Thyroid gland (tissue), 4 donors: ENCODE measurements at regions of chr2 and their contacts with region 1.

Region 1: DNA sequence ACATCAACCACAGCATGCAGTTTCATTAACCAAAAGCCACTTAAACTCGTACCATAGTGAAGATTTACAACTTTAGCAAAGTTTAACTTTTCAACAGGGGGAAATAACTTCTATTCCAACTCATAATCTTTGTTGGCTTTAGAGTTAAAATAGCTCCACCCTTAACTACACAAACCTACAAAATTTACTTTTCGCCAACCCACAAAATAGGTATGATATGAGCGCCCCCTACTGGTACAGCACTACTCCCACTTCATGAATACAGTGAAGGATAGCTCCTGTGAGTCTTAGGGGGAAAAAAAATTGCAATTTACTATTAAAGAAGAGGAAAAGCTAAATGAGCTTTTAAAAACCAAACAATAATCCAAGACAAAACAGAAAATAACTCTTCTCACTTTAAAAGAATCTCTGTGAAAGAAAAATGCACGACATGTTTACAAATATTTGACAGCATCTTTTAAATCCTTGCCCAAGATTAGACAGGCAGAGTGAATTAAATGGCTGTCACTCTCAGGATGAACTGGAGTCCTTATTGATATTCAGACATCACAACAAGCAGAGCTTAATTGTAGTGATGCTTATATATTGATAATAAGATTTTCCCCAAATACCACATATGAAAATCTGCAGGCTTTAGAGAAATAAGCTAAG is 32.2 kb downstream of the TMEFF2 start:
- DNase-seq: peak; percentile 64 to 77
- H3K4me3 ChIP-seq: no peak overlapping the region
- H3K27ac ChIP-seq: no peak overlapping the region
- H3K4me1 ChIP-seq: peaks cover 0 to 6% of the 10 kb centered on the region in 2 donors
- H3K27me3 ChIP-seq: no peaks in the 10 kb centered on the region
- CTCF ChIP-seq: peak; percentile 82 to 97 (median 89)
- POLR2A ChIP-seq: no peak

Region 2: DNA sequence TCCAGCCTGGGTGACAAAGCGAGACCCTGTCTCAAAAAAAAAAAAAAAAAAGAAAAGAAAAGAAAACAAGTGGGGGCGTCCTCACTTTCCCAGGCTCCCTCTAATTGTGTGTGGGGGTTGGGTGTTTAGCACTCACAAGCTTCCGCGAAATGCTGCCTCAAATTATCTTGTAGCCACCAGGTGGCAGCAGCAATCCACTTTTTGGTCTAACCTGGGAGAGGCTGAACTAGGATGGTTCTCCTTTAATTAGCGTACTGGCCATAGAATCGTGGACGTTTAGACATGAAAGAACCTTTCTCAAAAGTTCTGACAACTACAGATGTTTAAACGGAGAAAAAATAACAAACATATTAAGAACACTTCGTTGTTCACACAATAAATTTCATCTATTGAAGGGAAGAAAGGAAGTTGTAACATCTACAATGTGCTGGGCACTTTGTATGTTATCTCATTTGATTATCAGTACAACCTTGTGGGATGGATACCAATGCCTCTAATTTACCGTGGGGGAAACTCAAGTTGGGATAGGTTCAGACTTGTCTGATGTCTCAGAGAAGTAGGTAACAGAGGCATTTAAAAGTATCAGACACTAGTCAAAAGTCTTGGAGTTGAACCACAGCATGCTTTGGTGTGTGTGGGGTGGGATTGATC is 607.3 kb before region 1 on chr2:
- intact Hi-C with region 1: loop called (anchors 10 kb)
- DNase-seq: peak; percentile 78 to 85
- H3K4me3 ChIP-seq: no peak overlapping the region
- H3K27ac ChIP-seq: no peak overlapping the region
- H3K4me1 ChIP-seq: no peaks in the 10 kb centered on the region
- H3K27me3 ChIP-seq: no peaks in the 10 kb centered on the region
- CTCF ChIP-seq: peak in 5 of 6 experiments; percentile 35 to 76 (median 72)
- POLR2A ChIP-seq: no peak

Region 3: GRCh38 chr2:191811807-191812602 is 350.5 kb before region 1 on chr2:
- intact Hi-C with region 1: loop called (anchors 5 kb)
- DNase-seq: peak; percentile 54 to 71
- H3K4me3 ChIP-seq: no peak overlapping the region
- H3K27ac ChIP-seq: no peak overlapping the region
- H3K4me1 ChIP-seq: no peaks in the 10 kb centered on the region
- H3K27me3 ChIP-seq: no peaks in the 10 kb centered on the region
- CTCF ChIP-seq: peak; percentile 32 to 90 (median 79)
- POLR2A ChIP-seq: no peak

Region 4: GRCh38 chr2:191995285-191995684 is 167.2 kb before region 1 on chr2:
- intact Hi-C with region 1: no loop called
- DNase-seq: no peak
- H3K4me3 ChIP-seq: no peak overlapping the region
- H3K27ac ChIP-seq: no peak overlapping the region
- H3K4me1 ChIP-seq: no peaks in the 10 kb centered on the region
- H3K27me3 ChIP-seq: no peaks in the 10 kb centered on the region
- CTCF ChIP-seq: no peak
- POLR2A ChIP-seq: no peak

Region 5: GRCh38 chr2:192029089-192029488 is 133.4 kb before region 1 on chr2:
- intact Hi-C with region 1: no loop called
- DNase-seq: no peak
- H3K4me3 ChIP-seq: no peak overlapping the region
- H3K27ac ChIP-seq: no peak overlapping the region
- H3K4me1 ChIP-seq: no peaks in the 10 kb centered on the region
- H3K27me3 ChIP-seq: no peaks in the 10 kb centered on the region
- CTCF ChIP-seq: no peak
- POLR2A ChIP-seq: no peak

Region 6: DNA sequence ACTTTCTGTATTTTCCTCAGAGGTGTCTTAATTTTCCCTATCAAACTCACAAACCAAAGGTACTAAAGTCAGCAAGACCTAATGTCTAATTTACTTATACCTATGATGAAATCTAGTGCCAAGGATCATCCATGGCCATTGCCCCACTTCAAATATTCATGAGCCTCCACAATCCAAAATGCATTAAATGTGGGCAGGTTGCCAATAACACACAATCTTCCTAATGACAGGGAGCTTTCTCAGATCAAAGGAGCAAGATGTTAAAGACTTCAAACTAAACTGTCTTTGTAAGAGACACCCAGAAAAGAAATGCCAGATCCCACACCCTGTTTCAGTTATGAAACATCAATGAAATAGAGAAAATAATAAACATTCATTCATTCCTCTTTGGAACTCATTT is 111.0 kb before region 1 on chr2:
- intact Hi-C with region 1: no loop called
- DNase-seq: no peak
- H3K4me3 ChIP-seq: no peak overlapping the region
- H3K27ac ChIP-seq: no peak overlapping the region
- H3K4me1 ChIP-seq: no peaks in the 10 kb centered on the region
- H3K27me3 ChIP-seq: no peaks in the 10 kb centered on the region
- CTCF ChIP-seq: no peak
- POLR2A ChIP-seq: no peak